ENCODE measurements at regions of chr10 and their contacts with region 1.

Region 1: DNA sequence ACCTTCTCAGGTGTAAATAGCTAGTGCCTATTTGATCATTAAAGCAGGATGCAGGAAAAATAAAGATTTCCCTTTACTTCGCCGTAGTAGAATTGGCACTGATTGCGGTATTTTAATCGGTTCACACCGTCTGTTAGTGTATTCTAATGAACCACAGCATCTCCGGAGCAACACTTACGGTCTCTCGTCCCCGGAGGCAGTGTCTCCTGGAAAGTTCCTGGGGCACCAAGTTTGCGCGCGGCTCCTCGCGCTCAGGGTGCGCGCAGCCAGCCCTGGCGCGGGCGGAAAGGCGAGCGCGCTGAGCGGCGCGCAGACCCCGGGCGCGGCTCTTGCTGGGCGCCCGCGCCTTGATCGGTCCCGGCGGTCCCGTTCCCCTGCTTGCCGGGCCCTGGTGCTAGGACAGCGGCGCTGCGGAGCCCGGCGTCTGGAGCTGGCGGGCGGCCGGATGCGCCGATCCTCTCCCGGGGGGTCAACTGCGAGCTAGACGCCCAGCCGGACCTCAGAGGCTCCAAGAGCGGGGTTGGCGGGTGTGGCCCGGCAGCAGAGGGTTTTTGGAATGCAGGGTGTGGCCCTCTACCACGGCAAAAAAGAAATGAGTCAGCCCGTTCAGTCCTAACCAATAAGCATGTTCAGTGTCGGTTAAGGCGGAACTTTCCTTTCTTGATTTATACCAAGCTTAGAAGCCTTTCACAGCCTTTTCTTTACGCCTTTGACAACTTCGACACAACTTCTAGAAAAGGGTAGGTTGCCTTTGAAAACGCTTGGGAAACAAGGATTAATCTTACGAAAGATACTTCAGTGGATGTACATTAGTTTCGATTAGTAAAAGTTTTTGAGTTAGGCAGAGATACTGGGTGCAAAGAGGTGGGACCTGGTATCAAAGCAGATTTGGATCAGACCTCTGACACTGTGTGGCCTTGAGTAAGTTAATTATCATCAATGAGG is 166.8 kb upstream of the ASAH2 start:
- DNase-seq: peak; percentile 84
- ATAC-seq: peak; percentile 86 to 98

Region 2: DNA sequence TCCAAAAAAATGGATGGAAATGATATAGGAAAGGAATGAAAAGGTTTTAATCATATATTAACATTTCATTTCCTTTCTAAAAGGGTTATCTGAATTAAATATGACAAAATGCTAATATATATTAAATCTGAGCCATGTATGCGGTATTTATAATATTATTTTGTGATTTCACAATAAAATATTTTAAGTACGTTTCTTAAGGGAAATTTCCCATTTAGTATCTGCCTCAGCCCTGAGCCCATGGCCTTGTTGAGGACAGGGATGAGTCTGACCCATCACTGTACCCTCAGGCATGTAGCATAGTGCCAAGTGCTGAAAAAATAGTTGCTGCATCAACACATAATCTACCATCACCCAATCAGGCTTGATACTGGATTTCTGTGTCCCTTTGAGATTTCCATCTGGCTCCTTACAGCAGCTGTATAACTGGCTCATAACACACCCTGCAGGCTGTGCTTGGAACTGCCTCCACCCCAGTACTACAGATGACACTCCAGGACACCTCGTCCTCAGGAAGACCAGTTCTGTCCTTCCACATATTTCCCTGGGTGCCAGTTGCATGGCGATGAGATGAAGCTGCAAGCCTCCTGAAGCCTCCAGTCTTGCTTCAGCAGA is 107.5 kb before region 1 on chr10:
- intact Hi-C with region 1: loop called in 1 of 2 experiments (anchors 10 kb)
- DNase-seq: no peak
- ATAC-seq: no peak

Region 3: DNA sequence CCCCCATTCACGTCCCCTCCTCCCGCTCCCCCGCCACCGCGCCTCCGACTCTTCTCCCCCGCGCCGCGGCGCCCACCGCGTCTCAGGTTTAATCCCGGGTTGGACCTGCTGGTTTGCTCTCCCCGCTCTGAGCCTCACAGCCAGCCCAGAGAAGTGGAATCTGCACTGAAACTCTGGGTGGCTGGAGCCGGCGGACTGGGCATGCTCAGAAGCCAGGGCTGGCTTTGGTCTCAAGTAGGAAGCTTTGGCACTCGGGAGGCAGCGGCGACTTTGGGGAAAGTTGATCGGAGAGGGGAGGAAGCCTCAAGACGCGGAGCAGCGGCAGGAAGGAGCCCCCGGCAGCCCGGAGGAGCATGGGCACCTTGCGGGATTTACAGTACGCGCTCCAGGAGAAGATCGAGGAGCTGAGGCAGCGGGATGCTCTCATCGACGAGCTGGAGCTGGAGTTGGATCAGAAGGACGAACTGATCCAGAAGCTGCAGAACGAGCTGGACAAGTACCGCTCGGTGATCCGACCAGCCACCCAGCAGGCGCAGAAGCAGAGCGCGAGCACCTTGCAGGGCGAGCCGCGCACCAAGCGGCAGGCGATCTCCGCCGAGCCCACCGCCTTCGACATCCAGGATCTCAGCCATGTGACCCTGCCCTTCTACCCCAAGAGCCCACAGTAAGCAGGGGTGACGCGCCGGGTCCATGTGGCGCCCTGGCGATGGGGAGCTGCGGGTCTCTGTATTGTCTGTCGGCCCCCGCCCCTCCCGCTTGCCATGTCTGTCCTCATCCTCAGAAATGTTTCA is 656.3 kb after region 1 on chr10 and contains the start of gene PRKG1:
- intact Hi-C with region 1: no loop called
- DNase-seq: peak; percentile 86
- ATAC-seq: peak; percentile 92 to 98
- total RNA-seq, gene PRKG1: 31.5 to 34.7 TPM

Measured in left cardiac atrium (tissue), 4 donors.